Head of caudate nucleus (tissue), 42 donors: ENCODE measurements at regions of chr12 and their contacts with region 1.

Region 1: DNA sequence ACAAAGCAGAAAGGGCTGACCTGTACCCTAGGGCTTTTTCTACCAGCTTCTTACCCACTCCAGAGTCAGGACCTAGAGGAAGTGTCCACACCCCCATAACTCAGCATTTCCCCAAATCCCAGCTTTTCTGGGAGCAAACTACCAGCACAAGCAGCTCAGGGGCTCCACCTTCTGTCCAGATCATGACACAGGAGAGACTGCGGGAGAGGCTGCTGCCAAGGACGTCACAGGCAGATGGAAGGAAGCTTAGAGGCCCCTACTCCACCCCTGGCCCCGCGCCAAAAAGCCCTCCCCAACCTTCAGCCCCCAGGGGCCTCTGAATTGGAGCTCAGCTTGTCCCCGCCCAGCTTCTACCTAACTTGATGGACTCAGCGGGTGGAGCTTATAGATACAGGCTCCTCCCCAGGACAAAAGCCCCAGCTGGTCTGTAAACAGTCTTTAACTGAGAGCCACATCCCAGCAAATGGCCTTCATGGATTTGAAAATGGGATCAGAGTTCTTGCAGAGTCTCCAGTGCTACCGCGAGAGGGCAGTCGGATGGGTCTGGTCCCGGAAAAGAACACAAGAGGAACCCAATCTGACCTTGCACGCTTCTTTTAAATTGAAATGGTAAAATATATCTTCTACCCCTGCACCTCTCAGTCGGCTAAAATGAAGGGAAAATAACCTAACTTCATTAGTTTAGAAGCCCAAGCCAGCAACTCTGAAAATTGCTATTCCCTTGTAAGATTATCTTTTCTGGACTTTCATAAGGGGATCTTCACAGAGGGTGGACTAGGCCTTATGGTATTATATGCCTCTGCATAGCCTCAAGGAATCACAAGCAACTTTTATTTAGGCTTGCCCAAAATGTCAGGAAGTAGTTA is 6.8 kb upstream of the BAZ2A start:
- DNase-seq: peak; percentile 88 to 98 (median 94)

Region 2: GRCh38 chr12:56688129-56688845 is 51.4 kb after region 1 on chr12 and contains the start of gene PTGES3:
- intact Hi-C with region 1: loop called (anchors 5 kb)
- DNase-seq: peak; percentile 84 to 98 (median 93)

Region 3: DNA sequence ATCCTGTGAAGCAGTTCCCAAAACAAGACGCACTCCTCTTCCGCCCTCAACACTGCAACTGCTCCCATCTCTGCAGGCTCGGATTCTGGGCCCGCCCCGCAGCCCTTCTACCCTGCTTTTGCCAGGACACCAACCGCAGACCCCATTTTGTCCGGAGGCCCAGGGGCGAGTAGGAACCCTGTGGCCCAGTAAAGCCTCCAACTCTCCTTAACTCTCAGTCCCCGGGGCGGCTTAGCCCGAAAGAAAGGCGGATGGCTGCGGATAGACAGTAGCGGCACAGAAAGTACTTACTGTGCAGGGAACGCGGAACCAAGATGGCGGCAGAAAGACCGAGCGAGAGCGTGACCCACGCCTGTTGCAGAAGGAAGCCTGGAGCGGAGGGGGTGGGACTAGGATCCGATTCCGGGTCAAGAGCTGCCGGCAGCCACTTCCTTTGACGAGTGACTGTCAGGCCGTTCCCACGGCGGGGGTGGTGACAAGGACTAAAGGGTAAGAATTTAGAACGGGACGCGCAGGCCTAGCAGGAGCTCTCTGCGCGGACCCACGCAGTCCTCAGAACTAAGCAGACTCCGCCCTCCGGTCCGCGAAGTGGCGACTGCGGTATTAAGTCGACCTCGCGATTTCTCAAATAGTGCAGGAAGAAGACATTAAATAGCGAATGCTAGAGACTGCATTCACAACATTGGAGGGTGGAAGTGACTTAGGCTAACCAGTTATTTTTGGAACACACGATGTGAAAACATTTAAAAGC is 88.2 kb after region 1 on chr12 and contains the start of gene NACA:
- intact Hi-C with region 1: loop called (anchors 10 kb)
- DNase-seq: peak; percentile 98 to 100 (median 99)